Activated naive CD4-positive, alpha-beta T cell treated with anti-CD3 and anti-CD28 coated beads for 36 hours (primary cell): ENCODE measurements at regions of chr5 and their contacts with region 1.

Region 1: DNA sequence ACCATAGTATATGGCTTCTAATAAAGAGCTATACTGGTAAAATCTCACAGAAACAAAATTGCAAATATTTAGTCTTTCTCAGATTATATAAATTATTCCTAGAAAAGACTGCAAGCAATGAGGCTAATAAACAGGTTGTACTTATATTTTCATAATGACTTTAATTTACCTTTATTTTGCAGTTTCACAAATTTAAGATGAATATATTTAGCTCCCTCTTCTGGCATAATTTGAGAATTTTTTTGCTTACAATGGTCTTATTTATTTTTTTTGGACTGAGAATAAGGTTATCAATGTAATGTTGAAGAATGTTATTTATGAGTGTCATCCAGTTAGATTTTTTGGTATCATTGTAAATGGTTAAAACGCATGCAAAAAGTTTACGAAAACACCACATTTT is 56.7 kb downstream of the PIK3R1 start:
- DNase-seq: no peak
- H3K4me3 Mint-ChIP-seq: no peak overlapping the region
- H3K27ac Mint-ChIP-seq: peak overlapping the region; percentile 36
- H3K4me1 Mint-ChIP-seq: peaks cover 82% of the 10 kb centered on the region
- H3K27me3 Mint-ChIP-seq: no peaks in the 10 kb centered on the region

Region 2: DNA sequence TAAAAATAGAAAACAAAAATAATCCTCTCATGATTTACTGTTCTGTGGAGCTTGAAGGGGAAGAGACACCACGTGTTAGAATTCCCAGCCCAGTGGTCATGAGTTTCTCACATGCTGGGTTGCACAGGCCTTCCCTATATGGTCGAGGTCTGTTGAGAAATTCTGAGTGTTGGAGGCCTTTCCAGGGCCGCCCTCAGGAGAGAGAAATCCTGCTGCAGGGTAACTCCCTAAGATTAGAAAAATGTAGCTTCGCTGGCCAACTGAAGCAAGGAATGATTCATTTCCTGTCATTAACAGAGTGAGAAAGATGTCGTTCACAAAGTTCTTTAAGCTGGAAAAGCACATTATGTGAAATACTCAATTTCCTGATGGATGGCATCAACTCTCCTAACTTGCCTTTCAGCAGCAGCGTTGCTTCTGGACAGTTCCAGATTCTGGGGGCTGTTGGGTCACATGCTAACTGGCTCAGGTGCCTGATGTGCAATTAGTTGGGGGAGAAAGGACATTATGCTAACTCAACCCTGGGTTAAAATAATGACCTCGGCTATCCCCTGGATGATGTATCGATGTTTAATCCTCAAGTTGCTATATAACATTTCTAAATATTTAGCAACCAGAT is 970.9 kb before region 1 on chr5:
- CTCF ChIA-PET with region 1: no interaction called
- intact Hi-C with region 1: loop called (anchors 10 kb)
- DNase-seq: no peak
- H3K4me3 Mint-ChIP-seq: no peak overlapping the region
- H3K27ac Mint-ChIP-seq: no peak overlapping the region
- H3K4me1 Mint-ChIP-seq: peaks cover 11% of the 10 kb centered on the region
- H3K27me3 Mint-ChIP-seq: peaks cover 1% of the 10 kb centered on the region

Region 3: DNA sequence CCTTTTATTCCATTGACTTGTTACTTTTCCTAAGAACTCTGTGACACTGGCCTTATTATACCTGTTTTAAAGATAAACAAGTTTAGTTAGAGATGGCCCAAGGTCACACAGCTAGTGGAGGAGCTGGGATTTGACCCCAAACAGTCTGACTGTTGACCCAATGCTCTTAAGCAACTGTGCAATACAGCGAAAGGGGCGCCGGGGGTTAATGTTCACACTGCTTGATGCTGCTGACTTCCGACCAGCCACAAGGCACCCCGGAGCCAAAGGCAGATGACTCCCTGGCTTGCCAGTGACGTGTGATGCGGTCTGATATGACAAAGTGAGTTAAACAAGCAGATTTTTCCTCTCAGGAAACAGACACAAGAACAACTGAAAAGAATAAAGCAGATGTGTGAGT is 32.8 kb before region 1 on chr5:
- CTCF ChIA-PET with region 1: interaction called, 3 read pairs
- intact Hi-C with region 1: loop called (anchors 1 kb)
- DNase-seq: peak; percentile 93
- H3K4me3 Mint-ChIP-seq: peak overlapping the region; percentile 36
- H3K27ac Mint-ChIP-seq: peak overlapping the region; percentile 72
- H3K4me1 Mint-ChIP-seq: peaks cover 80% of the 10 kb centered on the region
- H3K27me3 Mint-ChIP-seq: no peaks in the 10 kb centered on the region

Region 4: DNA sequence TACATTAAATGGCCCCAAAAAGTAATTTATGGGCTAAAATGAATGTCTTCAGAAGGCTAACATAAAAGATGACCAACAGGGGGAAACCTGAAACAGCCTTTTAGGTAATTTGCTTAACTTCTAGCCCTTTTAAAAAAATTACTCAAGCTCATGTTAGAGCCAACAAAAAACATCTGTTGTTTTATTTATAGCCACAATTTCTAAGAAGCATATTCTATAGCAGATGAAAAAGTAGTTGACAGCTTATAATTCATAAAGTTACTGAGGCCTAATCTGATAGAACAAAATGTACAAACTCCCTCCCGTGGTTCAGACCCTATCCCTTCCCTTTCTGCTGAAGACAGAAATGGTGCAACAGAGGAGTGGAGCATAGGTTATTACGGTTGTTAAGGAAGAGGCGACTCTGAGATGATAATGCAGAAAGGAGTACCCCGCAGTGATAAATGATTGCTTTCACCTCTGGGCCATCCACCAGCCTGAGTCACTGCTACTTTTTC is 10.7 kb before region 1 on chr5:
- CTCF ChIA-PET with region 1: interaction called, 11 read pairs
- intact Hi-C with region 1: no loop called
- DNase-seq: no peak
- H3K4me3 Mint-ChIP-seq: no peak overlapping the region
- H3K27ac Mint-ChIP-seq: peak overlapping the region; percentile 21
- H3K4me1 Mint-ChIP-seq: peaks cover 84% of the 10 kb centered on the region
- H3K27me3 Mint-ChIP-seq: no peaks in the 10 kb centered on the region